Calu3 (cell line): ENCODE measurements at regions of chr2 and their contacts with region 1.

Region 1: GRCh38 chr2:143885461-143885860 is 634.5 kb downstream of the ZEB2 start:
- DNase-seq: no peak
- H3K4me3 Mint-ChIP-seq: no peak overlapping the region
- H3K27ac Mint-ChIP-seq: no peak overlapping the region
- H3K4me1 Mint-ChIP-seq: no peaks in the 10 kb centered on the region
- H3K27me3 Mint-ChIP-seq: no peaks in the 10 kb centered on the region
- CTCF ChIP-seq: no peak

Region 2: GRCh38 chr2:144143294-144144151 is 258.1 kb after region 1 on chr2:
- CTCF ChIA-PET with region 1: interaction called, 10 read pairs
- intact Hi-C with region 1: no loop called
- DNase-seq: no peak
- H3K4me3 Mint-ChIP-seq: no peak overlapping the region
- H3K27ac Mint-ChIP-seq: no peak overlapping the region
- H3K4me1 Mint-ChIP-seq: no peaks in the 10 kb centered on the region
- H3K27me3 Mint-ChIP-seq: no peaks in the 10 kb centered on the region
- CTCF ChIP-seq: no peak

Region 3: DNA sequence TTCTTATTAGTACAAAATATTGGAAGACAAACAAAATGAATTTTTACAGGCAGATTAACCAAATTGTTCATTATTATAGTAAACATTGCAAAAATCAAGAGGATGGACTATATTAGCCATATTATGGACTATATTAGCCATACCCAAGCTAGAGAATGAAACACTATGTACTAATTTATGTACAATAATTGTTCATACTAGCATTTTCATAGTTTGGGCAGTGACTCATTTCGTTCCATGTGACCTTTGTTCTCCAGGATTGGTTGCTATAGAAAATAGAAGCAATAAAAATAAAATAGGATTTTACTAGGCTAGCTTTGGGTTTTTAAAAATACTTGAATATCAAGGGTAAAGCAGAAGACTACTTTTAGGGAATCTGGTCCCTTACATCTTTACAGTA is 457.7 kb after region 1 on chr2:
- CTCF ChIA-PET with region 1: no interaction called
- intact Hi-C with region 1: no loop called
- DNase-seq: no peak
- H3K4me3 Mint-ChIP-seq: no peak overlapping the region
- H3K27ac Mint-ChIP-seq: no peak overlapping the region
- H3K4me1 Mint-ChIP-seq: no peaks in the 10 kb centered on the region
- H3K27me3 Mint-ChIP-seq: no peaks in the 10 kb centered on the region
- CTCF ChIP-seq: no peak

Region 4: GRCh38 chr2:144686518-144687215 is 801.2 kb after region 1 on chr2:
- CTCF ChIA-PET with region 1: no interaction called
- intact Hi-C with region 1: loop called (anchors 5 kb)
- DNase-seq: no peak
- H3K4me3 Mint-ChIP-seq: no peak overlapping the region
- H3K27ac Mint-ChIP-seq: no peak overlapping the region
- H3K4me1 Mint-ChIP-seq: no peaks in the 10 kb centered on the region
- H3K27me3 Mint-ChIP-seq: no peaks in the 10 kb centered on the region
- CTCF ChIP-seq: no peak